HepG2 (cell line): ENCODE measurements at regions of chr17 and their contacts with region 1.

Region 1: DNA sequence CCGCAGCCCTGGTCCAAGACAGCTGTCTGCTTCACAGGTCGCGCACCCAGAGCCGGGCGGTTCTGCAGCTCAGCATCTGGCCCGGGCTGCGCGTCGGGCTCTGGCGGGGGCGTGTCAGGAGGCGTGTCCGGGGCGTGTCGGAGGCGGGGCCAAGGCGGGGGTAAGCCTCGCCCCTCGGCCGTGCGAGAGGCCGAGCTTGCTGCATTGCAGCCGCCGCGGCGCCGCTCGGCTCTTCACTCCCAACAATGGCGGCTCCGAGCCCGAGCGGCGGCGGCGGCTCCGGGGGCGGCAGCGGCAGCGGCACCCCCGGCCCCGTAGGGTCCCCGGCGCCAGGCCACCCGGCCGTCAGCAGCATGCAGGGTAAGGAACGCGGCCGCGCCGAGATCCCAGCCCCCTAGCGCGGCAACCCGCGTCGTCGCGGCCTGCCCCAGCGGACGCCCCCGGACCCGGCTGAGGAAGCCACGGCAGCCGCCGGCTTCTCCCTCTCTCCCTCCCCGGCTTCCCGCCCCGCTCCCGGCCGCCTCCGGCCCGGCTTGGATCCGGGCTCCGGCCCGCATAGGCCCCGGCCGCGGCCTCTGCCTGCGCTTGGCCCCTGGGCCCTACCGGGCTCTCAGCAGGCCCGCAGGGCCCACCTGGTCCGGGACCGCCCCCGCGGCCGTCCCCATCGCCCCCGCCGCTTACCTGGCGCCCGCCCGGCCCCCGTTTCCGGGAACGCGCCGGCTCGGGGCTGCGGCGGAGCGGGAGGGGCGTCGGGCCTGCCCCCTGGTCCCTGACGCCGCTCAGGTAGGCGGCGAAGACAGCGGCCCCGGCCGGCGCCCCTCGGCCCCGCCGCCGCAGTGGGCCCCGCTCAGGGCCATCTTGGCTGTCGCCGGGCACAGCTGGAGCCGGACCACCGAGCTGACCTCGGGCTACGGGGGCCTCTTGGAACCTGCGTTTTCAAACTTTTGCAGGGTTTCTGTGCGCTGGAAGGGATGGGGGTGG is at the start of gene MAP2K4:
- DNase-seq: peak; percentile 69
- ATAC-seq: peak; percentile 98
- H3K4me3 ChIP-seq: peak within 1 kb of the TSS; percentile 66 to 84 (median 73)
- H3K27ac ChIP-seq: peak within 1 kb of the TSS; percentile 85
- H3K4me1 ChIP-seq: peaks cover 50% of the 10 kb centered on the region
- H3K27me3 ChIP-seq: peaks cover 2 to 12% of the 10 kb centered on the region in 2 experiments; a peak in 4 of 5 replicates
- CTCF ChIP-seq: no peak
- EP300 ChIP-seq: no peak; a peak in 1 of 4 replicates
- POLR2A ChIP-seq: peak; percentile 83 to 85
- RAD21 ChIP-seq: peak; percentile 56; the same call in 1 of the 2 replicates
- total RNA-seq, gene MAP2K4: 35.6 and 53.7 TPM in 2 replicates

Region 2: DNA sequence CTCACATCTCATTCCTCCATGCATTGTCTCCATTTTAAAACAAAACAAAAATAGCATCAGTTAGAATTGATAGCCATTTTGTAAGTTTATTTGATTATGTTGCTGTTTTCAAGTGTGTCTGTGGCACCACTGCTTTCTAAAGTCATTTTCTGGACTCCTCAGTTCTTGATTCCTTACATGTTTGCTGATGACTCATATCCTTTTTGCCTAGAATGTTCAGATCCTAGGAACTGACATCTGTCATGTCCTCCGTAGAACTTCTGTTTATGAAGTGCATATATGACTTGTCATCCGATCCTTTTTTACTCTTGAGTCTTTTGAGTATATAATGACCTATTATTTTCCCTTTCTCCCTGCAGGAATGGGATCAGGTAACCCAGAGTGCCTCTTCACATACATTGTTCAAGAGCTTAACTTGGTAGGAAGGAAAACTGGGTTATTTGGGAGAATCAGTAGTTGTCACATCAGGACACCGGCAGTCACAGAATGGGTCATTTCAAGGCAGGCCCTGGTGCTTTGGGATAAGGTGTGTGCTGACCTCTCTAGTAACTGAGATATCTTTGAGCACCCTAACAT is 69.0 kb after region 1 on chr17:
- CTCF ChIA-PET with region 1: no interaction called
- POLR2A ChIA-PET with region 1: no interaction called
- in situ Hi-C with region 1: no loop called
- intact Hi-C with region 1: loop called (anchors 10 kb)
- DNase-seq: peak; percentile 69
- ATAC-seq: no peak
- H3K4me3 ChIP-seq: no peak overlapping the region
- H3K27ac ChIP-seq: no peak overlapping the region
- H3K4me1 ChIP-seq: peaks cover 53% of the 10 kb centered on the region
- H3K27me3 ChIP-seq: no peaks in the 10 kb centered on the region
- CTCF ChIP-seq: no peak
- EP300 ChIP-seq: no peak
- POLR2A ChIP-seq: no peak
- RAD21 ChIP-seq: no peak

Region 3: DNA sequence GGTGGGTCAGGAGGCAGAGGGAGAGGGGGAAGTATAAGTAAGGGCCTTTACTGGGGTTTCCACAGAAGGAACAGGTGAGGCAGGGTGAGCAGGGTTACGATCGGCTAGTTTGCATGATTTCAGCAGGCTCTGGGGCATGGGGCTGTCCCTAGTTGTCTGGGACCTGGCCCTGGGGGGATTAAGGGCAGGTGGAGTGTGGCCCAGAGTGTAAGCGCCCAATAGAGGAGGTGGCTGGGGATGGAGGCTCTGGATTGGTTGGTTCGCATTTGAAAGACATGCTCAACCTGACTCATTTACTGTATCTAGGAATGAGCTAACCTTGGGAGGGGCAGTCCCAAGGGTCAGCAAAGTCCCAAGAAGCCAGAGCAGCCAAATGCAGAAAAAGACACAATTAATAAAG is 230.0 kb after region 1 on chr17:
- CTCF ChIA-PET with region 1: no interaction called
- POLR2A ChIA-PET with region 1: no interaction called
- in situ Hi-C with region 1: no loop called
- intact Hi-C with region 1: no loop called
- DNase-seq: no peak
- ATAC-seq: no peak
- H3K4me3 ChIP-seq: no peak overlapping the region
- H3K27ac ChIP-seq: no peak overlapping the region
- H3K4me1 ChIP-seq: no peaks in the 10 kb centered on the region
- H3K27me3 ChIP-seq: peaks cover 4 to 41% of the 10 kb centered on the region in 2 experiments; a peak in 3 of 5 replicates
- CTCF ChIP-seq: no peak
- EP300 ChIP-seq: no peak
- POLR2A ChIP-seq: no peak
- RAD21 ChIP-seq: no peak